ENCODE measurements at regions of chr6 and their contacts with region 1.

Region 1: GRCh38 chr6:129709769-129710449 is at the start of gene ARHGAP18:
- DNase-seq: peak; percentile 76 to 98 (median 82)
- ATAC-seq: peak; percentile 95
- H3K4me3 ChIP-seq: peak within 1 kb of the TSS; percentile 64
- H3K27ac ChIP-seq: peak within 1 kb of the TSS; percentile 81
- H3K4me1 ChIP-seq: peaks cover 7 to 30% of the 10 kb centered on the region in 2 experiments; a peak in 4 of 5 replicates
- H3K27me3 ChIP-seq: no peaks in the 10 kb centered on the region
- CTCF ChIP-seq: no peak
- EP300 ChIP-seq: peak; percentile 48
- POLR2A ChIP-seq: peak; percentile 82
- RAD21 ChIP-seq: no peak
- polyA plus RNA-seq, gene ARHGAP18: 17.8 to 19.0 TPM

Region 2: DNA sequence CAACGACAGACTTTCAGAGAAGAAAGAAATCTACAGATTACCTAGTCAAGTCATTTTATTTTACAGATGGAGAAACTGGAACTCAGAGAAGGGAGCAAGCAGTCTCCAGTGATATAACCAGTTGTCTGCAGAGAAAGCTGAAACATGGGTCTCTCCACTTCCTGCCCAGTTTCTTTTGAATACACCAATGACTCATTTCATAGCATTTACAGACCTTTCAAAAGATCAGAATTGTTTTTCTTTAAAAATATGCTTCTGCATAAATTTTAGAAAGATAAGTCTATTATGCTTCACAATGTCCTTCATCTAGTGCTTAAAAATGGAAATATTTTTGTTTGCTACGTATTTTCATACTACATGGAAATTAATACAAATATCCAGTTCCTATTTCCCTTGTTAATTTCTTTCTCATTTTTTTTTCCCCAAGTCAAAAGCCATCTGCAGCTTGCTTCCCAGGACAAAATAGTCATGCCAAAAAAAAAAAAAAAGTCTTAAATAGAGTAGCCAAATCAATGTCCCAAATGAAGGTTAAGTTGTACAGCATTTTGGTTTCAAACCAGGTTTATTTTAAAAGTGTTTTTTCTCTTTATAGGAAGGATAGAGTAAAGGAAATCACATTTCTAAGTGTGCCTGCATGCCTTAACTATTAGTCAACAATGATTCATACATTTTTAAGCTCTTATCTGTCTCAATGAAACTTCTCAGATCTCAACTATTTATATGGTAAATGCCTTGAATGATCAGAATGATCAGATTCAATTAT is 36.8 kb before region 1 on chr6:
- CTCF ChIA-PET with region 1: no interaction called
- POLR2A ChIA-PET with region 1: interaction called, 4 read pairs
- in situ Hi-C with region 1: no loop called
- intact Hi-C with region 1: loop called (anchors 5 kb)
- DNase-seq: no peak
- ATAC-seq: no peak
- H3K4me3 ChIP-seq: no peak overlapping the region
- H3K27ac ChIP-seq: no peak overlapping the region
- H3K4me1 ChIP-seq: peaks cover 30 to 54% of the 10 kb centered on the region in 2 experiments
- H3K27me3 ChIP-seq: no peaks in the 10 kb centered on the region
- CTCF ChIP-seq: no peak
- EP300 ChIP-seq: no peak
- POLR2A ChIP-seq: no peak
- RAD21 ChIP-seq: no peak

Region 3: DNA sequence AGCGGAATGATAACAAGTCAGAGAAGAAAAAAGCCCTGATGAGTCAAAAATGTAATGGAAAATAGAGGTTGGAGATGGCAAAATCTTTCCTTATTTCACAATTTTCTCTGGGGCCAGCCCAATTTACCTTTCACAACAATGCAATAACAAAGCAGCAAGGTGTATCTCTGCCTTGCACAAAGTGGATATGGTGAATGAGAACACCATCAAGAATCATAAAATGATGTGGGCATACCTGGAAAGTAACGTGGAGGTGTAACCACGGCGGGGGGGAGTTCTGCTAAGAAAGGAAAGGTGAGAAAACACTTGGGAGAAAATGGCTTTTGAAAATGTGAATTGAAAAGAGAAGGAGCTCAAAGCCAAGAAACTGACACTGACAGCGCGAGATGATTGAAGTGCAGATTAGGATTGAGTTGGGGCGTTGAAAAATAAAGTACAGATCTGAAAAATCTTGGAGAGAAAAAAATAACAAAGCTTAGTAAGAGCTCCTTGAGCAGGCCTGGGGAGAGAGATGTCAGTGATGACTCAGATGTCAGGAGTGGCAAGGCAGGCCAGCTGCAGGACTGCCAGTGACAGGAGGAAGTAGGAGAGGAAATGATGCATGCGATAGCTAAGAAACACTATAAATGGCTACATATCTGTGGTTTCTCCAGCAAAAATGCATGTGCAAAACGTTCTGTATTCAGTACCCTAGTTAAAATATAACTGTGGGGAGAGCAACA is 26.1 kb before region 1 on chr6:
- CTCF ChIA-PET with region 1: no interaction called
- POLR2A ChIA-PET with region 1: interaction called, 7 read pairs
- in situ Hi-C with region 1: no loop called
- intact Hi-C with region 1: loop called (anchors 2 kb)
- DNase-seq: peak; percentile 73 to 94 (median 82)
- ATAC-seq: peak; percentile 86
- H3K4me3 ChIP-seq: peak overlapping the region; percentile 9; the same call in 1 of the 2 replicates
- H3K27ac ChIP-seq: peak overlapping the region; percentile 90
- H3K4me1 ChIP-seq: peaks cover 12 to 67% of the 10 kb centered on the region in 2 experiments
- H3K27me3 ChIP-seq: no peaks in the 10 kb centered on the region
- CTCF ChIP-seq: no peak
- EP300 ChIP-seq: peak; percentile 88
- POLR2A ChIP-seq: no peak
- RAD21 ChIP-seq: no peak

Region 4: DNA sequence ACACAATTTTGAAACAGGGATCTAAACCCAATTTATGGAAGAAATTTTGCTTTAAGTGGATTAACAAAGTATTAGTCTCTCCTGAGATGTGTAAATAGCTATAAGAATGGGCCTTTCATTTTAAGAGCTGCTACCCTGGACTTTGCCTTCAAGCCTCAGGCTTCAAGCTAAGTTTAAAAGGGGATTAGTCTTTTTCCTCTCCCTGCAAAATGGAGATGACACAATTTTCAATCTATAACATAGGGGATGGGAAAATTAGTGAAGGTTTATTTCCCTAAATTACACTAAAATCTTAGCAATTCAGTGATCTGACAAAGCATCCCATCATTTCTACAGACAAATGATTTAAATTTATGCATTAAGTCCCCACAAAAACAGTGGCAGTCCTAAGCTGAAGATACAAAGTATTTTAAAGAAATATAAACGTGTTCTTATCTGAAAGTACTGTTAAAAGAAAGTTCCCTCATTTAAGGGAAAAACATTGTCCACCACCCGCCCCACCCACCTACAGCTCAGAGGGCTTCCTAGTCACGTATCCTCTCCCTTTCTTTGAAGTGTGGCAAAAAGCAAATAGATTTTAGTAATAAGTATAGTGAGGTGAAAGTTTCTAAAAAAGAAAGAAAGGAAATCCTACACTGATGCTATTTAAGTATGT is 14.4 kb before region 1 on chr6:
- CTCF ChIA-PET with region 1: no interaction called
- POLR2A ChIA-PET with region 1: interaction called, 36 read pairs
- in situ Hi-C with region 1: no loop called
- intact Hi-C with region 1: no loop called
- DNase-seq: peak in 2 of 4 experiments; percentile 32 to 63
- ATAC-seq: peak; percentile 30
- H3K4me3 ChIP-seq: no peak overlapping the region
- H3K27ac ChIP-seq: peak overlapping the region; percentile 49
- H3K4me1 ChIP-seq: peaks cover 11 to 73% of the 10 kb centered on the region in 2 experiments
- H3K27me3 ChIP-seq: no peaks in the 10 kb centered on the region
- CTCF ChIP-seq: no peak
- EP300 ChIP-seq: no peak
- POLR2A ChIP-seq: no peak
- RAD21 ChIP-seq: no peak

Measured in K562 (cell line).